Heart right ventricle (tissue), 16 donors: ENCODE measurements at regions of chr7 and their contacts with region 1.

Region 1: GRCh38 chr7:112069879-112070321 is 136.3 kb downstream of the DOCK4 start:
- DNase-seq: no peak
- ATAC-seq: peak in 1 of 8 donors; percentile 10
- H3K4me3 ChIP-seq: no peak overlapping the region
- H3K27ac ChIP-seq: no peak overlapping the region
- H3K4me1 ChIP-seq: peaks cover 0 to 59% (median 30%) of the 10 kb centered on the region in 9 donors
- H3K27me3 ChIP-seq: no peaks in the 10 kb centered on the region
- CTCF ChIP-seq: no peak

Region 2: DNA sequence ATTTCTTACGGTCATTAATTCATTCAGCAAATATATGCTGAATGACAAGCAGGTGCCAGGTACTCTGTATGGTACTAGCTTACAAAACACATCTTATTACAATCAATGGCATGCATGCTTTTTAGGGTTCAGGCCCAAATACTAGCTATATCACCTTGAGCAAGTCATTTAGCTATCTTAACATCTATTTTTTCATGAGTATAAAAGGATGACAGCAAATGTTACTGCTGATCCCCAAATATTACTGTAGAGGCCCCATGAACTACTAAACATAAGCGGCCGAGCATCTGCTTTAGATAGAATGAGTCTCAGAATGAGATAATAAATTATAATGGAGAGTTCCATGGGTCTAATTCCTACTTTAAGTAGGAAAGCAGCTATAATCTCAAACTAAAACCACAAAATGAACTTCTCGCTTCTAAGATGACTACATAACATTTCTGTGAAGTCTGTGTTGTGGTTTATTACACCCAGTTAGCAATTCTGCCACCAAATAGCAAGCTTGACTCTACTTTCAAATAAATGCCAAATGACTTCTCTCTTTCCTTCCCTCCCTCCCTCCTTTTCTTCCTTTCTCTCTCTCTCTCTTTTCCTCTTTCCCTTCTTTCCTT is 1092.7 kb before region 1 on chr7:
- intact Hi-C with region 1: no loop called
- DNase-seq: no peak
- ATAC-seq: no peak
- H3K4me3 ChIP-seq: no peak overlapping the region
- H3K27ac ChIP-seq: no peak overlapping the region
- H3K4me1 ChIP-seq: no peaks in the 10 kb centered on the region
- H3K27me3 ChIP-seq: no peaks in the 10 kb centered on the region
- CTCF ChIP-seq: no peak

Region 3: GRCh38 chr7:112010994-112011393 is 58.9 kb before region 1 on chr7:
- intact Hi-C with region 1: loop called in 1 of 10 experiments (anchors 10 kb)
- DNase-seq: peak in 1 of 2 donors; percentile 14
- ATAC-seq: peak in 6 of 8 donors; percentile 37 to 68 (median 50)
- H3K4me3 ChIP-seq: no peak overlapping the region
- H3K27ac ChIP-seq: peak overlapping the region in 1 of 10 donors; percentile 50
- H3K4me1 ChIP-seq: peaks cover 3 to 38% (median 24%) of the 10 kb centered on the region in 9 donors
- H3K27me3 ChIP-seq: no peaks in the 10 kb centered on the region
- CTCF ChIP-seq: no peak